CD4-positive, alpha-beta memory T cell (primary cell): ENCODE measurements at regions of chr6 and their contacts with region 1.

Region 1: GRCh38 chr6:27893059-27893835 is 18.9 kb downstream of the OR2B2 start:
- DNase-seq: peak; percentile 91 to 94 (median 93)
- H3K4me3 ChIP-seq: peak overlapping the region; percentile 72 to 86
- H3K4me3 Mint-ChIP-seq: no peak overlapping the region
- H3K27ac ChIP-seq: peak overlapping the region; percentile 80
- H3K27ac Mint-ChIP-seq: no peak overlapping the region
- H3K4me1 ChIP-seq: peaks cover 30% of the 10 kb centered on the region
- H3K4me1 Mint-ChIP-seq: peaks cover 15 to 40% (median 28%) of the 10 kb centered on the region in 4 donors
- H3K27me3 ChIP-seq: no peaks in the 10 kb centered on the region
- H3K27me3 Mint-ChIP-seq: no peaks in the 10 kb centered on the region

Region 2: DNA sequence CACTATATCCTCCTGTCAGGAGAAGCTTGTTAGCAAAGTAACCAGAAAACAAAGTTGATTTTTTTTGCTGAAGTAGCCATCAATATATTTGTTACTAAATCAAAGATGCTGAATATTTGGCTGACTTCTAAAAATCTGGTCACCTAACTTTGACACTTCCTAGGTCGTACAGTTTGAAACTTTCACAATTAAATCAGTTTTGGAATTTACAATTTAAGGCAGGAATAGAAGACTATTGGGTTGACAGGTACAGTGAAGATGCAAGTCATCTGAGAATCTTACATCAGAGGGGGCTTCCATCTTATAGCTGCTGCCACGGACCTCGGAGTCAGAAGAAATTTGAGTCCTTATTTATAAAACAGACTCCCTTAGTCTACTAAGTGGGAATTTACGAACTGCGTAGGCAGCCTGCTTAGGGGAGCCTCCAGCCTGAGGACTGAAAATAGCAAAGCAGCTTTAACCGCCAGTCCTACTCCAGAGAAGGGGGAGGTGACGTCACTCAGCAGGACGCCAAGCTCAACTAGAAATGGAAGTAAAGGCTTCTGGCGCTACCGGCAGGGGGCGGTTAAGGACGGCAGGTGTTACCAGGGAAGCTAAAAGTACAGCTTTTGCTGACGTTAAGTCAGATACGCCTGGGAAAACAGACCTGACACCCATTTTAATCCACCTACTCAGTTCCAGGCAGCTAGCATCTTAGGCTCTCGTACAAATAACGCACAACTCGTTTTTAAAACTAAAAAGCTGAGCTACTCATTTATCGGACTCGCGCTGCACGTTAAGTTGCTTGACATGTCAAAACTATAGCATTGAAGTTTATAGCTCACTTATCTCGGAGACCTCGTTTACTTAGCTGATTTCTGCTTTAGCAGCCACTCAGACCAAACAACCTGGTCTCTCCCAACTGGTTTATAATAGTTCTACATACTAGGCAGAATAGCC is 1867.1 kb before region 1 on chr6:
- CTCF ChIA-PET with region 1: interaction called, 4 read pairs
- POLR2A ChIA-PET with region 1: interaction called, 31 read pairs
- intact Hi-C with region 1: loop called (anchors 5 kb)
- DNase-seq: peak; percentile 90 to 98 (median 94)
- H3K4me3 ChIP-seq: peak overlapping the region; percentile 67 to 74
- H3K4me3 Mint-ChIP-seq: peak overlapping the region; percentile 85 to 98 (median 92)
- H3K27ac ChIP-seq: peak overlapping the region; percentile 89
- H3K27ac Mint-ChIP-seq: peak overlapping the region; percentile 96 to 100 (median 99)
- H3K4me1 ChIP-seq: peaks cover 29% of the 10 kb centered on the region
- H3K4me1 Mint-ChIP-seq: peaks cover 22 to 60% (median 39%) of the 10 kb centered on the region in 4 donors
- H3K27me3 ChIP-seq: no peaks in the 10 kb centered on the region
- H3K27me3 Mint-ChIP-seq: peaks cover 0 to 4% of the 10 kb centered on the region in 2 donors

Region 3: GRCh38 chr6:26216356-26216885 is 1676.8 kb before region 1 on chr6:
- CTCF ChIA-PET with region 1: interaction called, 4 read pairs
- POLR2A ChIA-PET with region 1: interaction called, 23 read pairs
- intact Hi-C with region 1: no loop called
- DNase-seq: peak; percentile 88 to 96 (median 94)
- H3K4me3 ChIP-seq: peak overlapping the region; percentile 75 to 85
- H3K4me3 Mint-ChIP-seq: no peak overlapping the region
- H3K27ac ChIP-seq: peak overlapping the region; percentile 82
- H3K27ac Mint-ChIP-seq: no peak overlapping the region
- H3K4me1 ChIP-seq: peaks cover 26% of the 10 kb centered on the region
- H3K4me1 Mint-ChIP-seq: peaks cover 0 to 5% (median 2%) of the 10 kb centered on the region in 4 donors
- H3K27me3 ChIP-seq: no peaks in the 10 kb centered on the region
- H3K27me3 Mint-ChIP-seq: no peaks in the 10 kb centered on the region

Region 4: DNA sequence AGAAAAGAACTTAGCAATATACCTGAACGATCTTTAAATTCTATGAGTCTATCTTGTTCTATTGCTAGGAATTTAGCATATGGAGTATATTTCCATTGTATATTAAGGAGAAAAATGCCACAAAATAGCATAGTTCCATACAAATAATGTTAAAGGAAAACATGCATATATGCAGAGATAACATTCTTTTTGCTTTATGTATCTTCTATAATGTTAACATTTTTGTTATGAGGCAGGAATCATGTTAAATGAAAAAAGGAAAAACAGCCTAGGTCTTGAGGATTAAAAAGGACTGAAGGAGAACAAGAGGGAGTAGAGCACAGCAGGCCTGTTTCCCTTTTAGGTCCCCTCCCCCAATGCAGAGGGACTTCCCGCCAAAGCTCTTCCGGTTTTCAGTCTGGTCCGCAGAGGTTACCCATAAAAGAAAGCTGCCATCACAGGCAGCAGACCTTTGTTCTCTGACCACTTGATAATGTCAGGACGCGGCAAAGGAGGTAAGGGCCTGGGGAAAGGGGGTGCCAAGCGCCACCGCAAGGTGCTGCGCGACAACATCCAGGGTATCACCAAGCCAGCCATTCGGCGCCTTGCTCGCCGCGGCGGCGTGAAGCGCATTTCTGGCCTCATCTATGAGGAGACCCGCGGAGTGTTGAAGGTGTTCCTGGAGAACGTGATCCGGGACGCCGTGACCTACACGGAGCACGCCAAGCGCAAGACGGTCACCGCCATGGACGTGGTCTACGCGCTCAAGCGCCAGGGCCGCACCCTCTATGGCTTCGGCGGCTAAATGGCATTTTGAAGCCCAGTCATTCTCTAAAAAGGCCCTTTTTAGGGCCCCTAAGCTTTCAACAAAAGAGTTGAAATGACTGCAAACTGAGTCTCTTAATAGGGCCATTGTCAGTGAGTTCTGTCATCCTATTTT is 754.2 kb before region 1 on chr6:
- CTCF ChIA-PET with region 1: no interaction called
- POLR2A ChIA-PET with region 1: interaction called, 137 read pairs
- intact Hi-C with region 1: no loop called
- DNase-seq: peak; percentile 64 to 79 (median 69)
- H3K4me3 ChIP-seq: peak overlapping the region; percentile 58 to 73
- H3K4me3 Mint-ChIP-seq: peak overlapping the region; percentile 93 to 98 (median 96)
- H3K27ac ChIP-seq: peak overlapping the region; percentile 94
- H3K27ac Mint-ChIP-seq: peak overlapping the region; percentile 98 to 99 (median 99)
- H3K4me1 ChIP-seq: peaks cover 45% of the 10 kb centered on the region
- H3K4me1 Mint-ChIP-seq: peaks cover 30 to 66% (median 40%) of the 10 kb centered on the region in 4 donors
- H3K27me3 ChIP-seq: no peaks in the 10 kb centered on the region
- H3K27me3 Mint-ChIP-seq: no peaks in the 10 kb centered on the region

Region 5: DNA sequence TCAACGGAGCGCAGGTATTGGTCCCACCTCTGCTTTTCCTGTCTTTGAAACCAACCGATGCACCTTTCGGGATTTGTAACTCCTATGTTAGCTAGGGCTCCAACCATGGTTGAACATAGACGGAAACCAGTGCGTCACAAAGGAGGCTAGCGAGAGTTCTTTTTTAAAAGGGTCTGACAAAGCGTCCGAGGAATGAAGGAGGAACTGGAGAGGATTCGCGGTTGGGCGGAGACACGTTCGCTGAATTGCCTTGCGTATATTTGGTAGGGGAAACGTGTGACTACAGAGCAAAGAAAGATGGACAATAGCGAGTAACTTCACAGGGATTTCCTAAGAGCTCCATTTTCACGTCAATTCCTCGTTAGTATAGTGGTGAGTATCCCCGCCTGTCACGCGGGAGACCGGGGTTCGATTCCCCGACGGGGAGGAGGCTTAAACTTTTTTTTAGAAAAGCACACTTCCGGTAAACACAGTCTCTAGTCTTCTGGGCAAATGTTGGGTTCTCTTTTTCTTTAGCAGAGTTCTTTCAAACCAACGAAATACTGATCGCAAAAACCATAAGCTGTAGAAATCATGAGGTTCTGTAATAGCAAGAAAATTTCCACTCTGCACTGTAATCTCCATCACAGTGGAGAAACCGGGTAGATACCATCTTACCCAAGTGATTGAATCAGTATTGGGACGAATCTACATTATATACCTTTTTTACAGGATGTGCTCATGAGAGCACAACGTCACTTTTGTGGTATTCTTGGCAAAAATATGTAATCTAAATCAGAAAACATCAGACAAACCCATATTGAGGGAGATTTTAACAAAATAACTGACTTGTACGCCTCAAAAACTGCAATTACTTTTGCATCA is 413.7 kb before region 1 on chr6:
- CTCF ChIA-PET with region 1: interaction called, 3 read pairs
- POLR2A ChIA-PET with region 1: interaction called, 38 read pairs
- intact Hi-C with region 1: loop called (anchors 2 kb)
- DNase-seq: peak; percentile 87 to 93 (median 92)
- H3K4me3 ChIP-seq: peak overlapping the region; percentile 88 to 93
- H3K4me3 Mint-ChIP-seq: no peak overlapping the region
- H3K27ac ChIP-seq: peak overlapping the region; percentile 85
- H3K27ac Mint-ChIP-seq: no peak overlapping the region
- H3K4me1 ChIP-seq: peaks cover 17% of the 10 kb centered on the region
- H3K4me1 Mint-ChIP-seq: peaks cover 0 to 11% (median 5%) of the 10 kb centered on the region in 4 donors
- H3K27me3 ChIP-seq: no peaks in the 10 kb centered on the region
- H3K27me3 Mint-ChIP-seq: no peaks in the 10 kb centered on the region

Region 6: DNA sequence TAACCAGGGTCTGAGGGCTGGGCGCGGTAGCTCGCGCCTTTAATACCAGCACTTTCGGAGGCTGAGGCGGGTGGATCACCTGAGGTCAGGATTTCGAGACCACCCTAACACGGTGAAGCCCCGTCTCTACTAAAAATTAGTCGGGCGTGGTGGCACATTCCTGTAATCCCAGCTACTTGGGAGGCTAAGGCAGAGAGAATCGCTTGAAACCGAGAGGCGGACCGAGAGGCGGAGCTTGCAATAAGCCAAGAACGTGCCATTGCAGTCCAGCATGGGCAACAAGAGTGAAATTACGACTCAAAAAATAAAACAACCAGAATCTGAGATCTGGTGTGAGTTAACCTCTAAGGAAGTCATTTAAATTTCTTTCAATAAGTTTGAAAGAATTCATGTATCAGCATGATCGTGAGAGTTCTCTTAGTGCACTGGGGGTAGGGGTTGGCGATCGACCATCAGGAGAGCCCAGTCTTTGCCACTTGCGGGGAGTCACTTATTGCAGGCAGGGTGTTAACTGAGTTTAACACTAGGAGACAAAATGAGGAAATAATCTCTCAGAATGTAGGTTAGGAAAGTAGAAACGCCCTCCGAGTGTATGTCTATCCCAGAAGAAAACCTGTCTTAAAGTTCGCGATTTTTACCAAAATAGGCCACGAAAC is 213.8 kb before region 1 on chr6:
- CTCF ChIA-PET with region 1: no interaction called
- POLR2A ChIA-PET with region 1: no interaction called
- intact Hi-C with region 1: no loop called
- DNase-seq: no peak
- H3K4me3 ChIP-seq: no peak overlapping the region
- H3K4me3 Mint-ChIP-seq: peak overlapping the region in 5 of 8 donors; percentile 14 to 66 (median 47)
- H3K27ac ChIP-seq: no peak overlapping the region
- H3K27ac Mint-ChIP-seq: peak overlapping the region in 5 of 7 donors; percentile 11 to 99 (median 86)
- H3K4me1 ChIP-seq: no peaks in the 10 kb centered on the region
- H3K4me1 Mint-ChIP-seq: peaks cover 0 to 14% (median 4%) of the 10 kb centered on the region in 4 donors
- H3K27me3 ChIP-seq: peaks cover 34% of the 10 kb centered on the region
- H3K27me3 Mint-ChIP-seq: peaks cover 51 to 54% of the 10 kb centered on the region in 2 donors

Region 7: DNA sequence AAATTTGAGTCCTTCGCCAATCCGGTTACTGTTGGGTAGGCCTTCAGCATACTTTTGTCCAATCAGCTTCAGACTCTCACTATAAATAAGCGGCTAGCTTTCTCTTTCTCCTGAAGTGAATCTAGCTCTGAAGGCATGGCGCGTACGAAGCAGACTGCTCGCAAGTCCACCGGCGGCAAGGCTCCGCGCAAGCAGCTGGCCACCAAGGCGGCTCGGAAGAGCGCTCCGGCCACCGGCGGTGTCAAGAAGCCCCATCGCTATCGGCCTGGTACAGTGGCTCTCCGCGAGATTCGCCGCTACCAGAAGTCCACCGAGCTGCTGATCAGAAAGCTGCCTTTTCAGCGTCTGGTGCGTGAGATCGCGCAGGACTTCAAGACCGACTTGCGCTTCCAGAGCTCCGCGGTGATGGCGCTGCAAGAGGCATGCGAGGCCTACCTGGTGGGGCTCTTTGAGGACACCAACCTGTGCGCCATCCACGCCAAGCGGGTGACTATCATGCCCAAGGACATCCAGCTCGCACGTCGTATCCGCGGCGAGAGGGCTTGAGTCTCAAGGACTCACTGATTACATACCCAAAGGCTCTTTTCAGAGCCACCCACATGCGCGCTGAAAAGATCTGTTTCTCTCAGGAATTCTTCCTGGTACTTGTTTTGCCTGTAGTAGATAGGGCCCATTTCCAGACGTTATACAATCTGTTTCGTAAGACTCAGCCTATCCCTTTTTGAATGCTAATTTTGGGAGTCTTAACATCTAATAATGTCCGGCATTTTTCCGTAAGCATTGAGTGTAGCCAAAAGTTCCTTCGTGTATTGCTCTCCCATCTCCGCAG is 83.1 kb before region 1 on chr6:
- CTCF ChIA-PET with region 1: interaction called, 137 read pairs
- POLR2A ChIA-PET with region 1: interaction called, 476 read pairs
- intact Hi-C with region 1: loop called (anchors 1 kb)
- DNase-seq: peak; percentile 85 to 94 (median 92)
- H3K4me3 ChIP-seq: peak overlapping the region; percentile 31 to 67
- H3K4me3 Mint-ChIP-seq: peak overlapping the region; percentile 92 to 99 (median 96)
- H3K27ac ChIP-seq: peak overlapping the region; percentile 79
- H3K27ac Mint-ChIP-seq: peak overlapping the region; percentile 94 to 98 (median 97)
- H3K4me1 ChIP-seq: peaks cover 49% of the 10 kb centered on the region
- H3K4me1 Mint-ChIP-seq: peaks cover 39 to 74% (median 50%) of the 10 kb centered on the region in 4 donors
- H3K27me3 ChIP-seq: no peaks in the 10 kb centered on the region
- H3K27me3 Mint-ChIP-seq: no peaks in the 10 kb centered on the region

Region 8: DNA sequence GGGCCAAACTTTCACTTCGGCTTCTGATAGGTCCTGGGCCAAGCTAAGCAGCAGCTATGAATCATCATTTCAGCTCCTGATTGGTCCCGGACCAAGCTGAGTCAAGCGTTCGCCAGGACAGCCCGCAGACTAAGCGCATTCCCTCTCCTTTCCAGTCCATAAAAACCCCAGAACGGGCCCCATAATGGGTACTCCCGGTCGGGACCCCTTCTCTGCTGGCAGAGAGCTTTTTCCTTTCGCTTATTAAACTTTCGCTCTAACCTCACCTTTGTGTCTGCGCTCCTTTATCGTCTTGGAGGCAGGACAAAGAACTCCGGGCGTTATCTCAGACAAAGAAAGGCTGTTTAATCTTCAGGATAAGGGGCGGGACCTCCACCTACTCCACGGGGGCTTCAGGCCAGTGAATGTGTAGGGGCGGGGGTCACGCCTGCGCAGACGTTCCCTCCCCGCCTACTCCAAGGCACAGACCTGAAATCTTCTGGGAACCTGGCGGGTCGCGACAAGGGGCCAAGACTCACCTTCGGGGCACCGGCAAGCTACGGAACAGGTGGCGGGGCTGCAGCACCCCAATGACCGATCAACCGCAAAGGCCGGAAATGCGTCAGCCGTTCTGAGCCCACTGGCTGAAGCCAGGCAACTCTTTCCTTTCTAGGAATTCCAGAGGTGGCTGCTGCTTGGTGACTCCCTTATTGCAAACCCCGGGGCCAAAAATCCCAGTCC is 442.5 kb after region 1 on chr6 and contains the start of gene ZSCAN31:
- CTCF ChIA-PET with region 1: interaction called, 3 read pairs
- POLR2A ChIA-PET with region 1: interaction called, 10 read pairs
- intact Hi-C with region 1: no loop called
- DNase-seq: peak; percentile 77 to 93 (median 81)
- H3K4me3 ChIP-seq: peak within 1 kb of the TSS; percentile 61 to 85
- H3K4me3 Mint-ChIP-seq: peak within 1 kb of the TSS in 1 of 8 donors; percentile 34
- H3K27ac ChIP-seq: peak within 1 kb of the TSS; percentile 87
- H3K27ac Mint-ChIP-seq: peak within 1 kb of the TSS in 1 of 7 donors; percentile 68
- H3K4me1 ChIP-seq: peaks cover 17% of the 10 kb centered on the region
- H3K4me1 Mint-ChIP-seq: peaks cover 0 to 4% (median 3%) of the 10 kb centered on the region in 4 donors
- H3K27me3 ChIP-seq: no peaks in the 10 kb centered on the region
- H3K27me3 Mint-ChIP-seq: peaks cover 0 to 3% of the 10 kb centered on the region in 2 donors
- total RNA-seq, gene ZSCAN31: 0.73 to 0.97 TPM